Calu3 (cell line): ENCODE measurements at regions of chr7 and their contacts with region 1.

Region 1: DNA sequence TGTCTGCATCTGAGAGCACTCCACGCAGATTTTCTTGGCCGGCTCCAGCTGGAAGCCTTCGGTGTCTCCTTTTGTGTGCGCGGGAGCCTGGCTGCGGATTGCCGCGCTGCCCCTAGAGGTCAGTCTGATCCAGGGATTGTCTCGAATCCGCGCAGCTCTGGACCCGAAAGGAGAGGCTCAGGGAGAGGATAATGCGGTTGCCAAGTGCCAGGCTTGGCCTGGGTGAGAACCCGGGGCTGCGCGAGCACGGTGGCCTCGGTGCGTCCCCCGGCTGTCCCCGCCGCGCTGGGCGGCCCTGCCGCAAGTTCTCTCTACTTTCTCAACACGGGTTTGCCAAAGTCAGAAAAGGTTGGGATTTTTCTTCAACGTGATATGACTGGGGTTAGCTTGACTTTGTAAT is 140.9 kb downstream of the ADCYAP1R1 start:
- DNase-seq: peak; percentile 84
- H3K4me3 Mint-ChIP-seq: no peak overlapping the region
- H3K27ac Mint-ChIP-seq: no peak overlapping the region
- H3K4me1 Mint-ChIP-seq: no peaks in the 10 kb centered on the region
- H3K27me3 Mint-ChIP-seq: peaks cover 66% of the 10 kb centered on the region
- CTCF ChIP-seq: peak; percentile 93

Region 2: GRCh38 chr7:31336202-31337001 is 143.4 kb after region 1 on chr7:
- CTCF ChIA-PET with region 1: interaction called, 11 read pairs
- intact Hi-C with region 1: loop called (anchors 2 kb)
- DNase-seq: peak; percentile 78
- H3K4me3 Mint-ChIP-seq: peak overlapping the region; percentile 67
- H3K27ac Mint-ChIP-seq: no peak overlapping the region
- H3K4me1 Mint-ChIP-seq: no peaks in the 10 kb centered on the region
- H3K27me3 Mint-ChIP-seq: peaks cover 83% of the 10 kb centered on the region
- CTCF ChIP-seq: peak; percentile 88

Region 3: DNA sequence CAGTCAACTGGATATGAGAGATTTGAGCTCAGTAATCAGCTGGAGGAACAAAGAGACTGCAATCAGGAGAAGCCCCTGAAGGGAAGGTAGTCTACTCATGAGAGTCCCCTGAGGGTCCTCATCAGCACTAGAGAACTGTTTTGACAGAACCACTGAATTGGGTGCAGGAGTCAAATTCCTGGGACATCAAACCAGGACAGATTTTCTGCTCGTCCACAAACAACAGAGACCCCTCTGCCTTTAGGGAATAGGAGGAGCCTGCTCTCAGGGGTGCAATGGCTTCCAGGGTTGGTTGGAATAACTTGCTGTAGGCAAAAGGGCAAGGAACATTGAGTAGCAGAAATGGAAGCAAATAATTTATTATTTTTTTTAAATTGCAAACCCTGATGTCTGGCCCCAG is 169.4 kb after region 1 on chr7:
- CTCF ChIA-PET with region 1: no interaction called
- intact Hi-C with region 1: no loop called
- DNase-seq: no peak
- H3K4me3 Mint-ChIP-seq: no peak overlapping the region
- H3K27ac Mint-ChIP-seq: no peak overlapping the region
- H3K4me1 Mint-ChIP-seq: no peaks in the 10 kb centered on the region
- H3K27me3 Mint-ChIP-seq: peaks cover 61% of the 10 kb centered on the region
- CTCF ChIP-seq: no peak

Region 4: GRCh38 chr7:31633894-31634494 is 441.0 kb after region 1 on chr7:
- CTCF ChIA-PET with region 1: interaction called, 13 read pairs
- intact Hi-C with region 1: loop called (anchors 2 kb)
- DNase-seq: peak; percentile 83
- H3K4me3 Mint-ChIP-seq: no peak overlapping the region
- H3K27ac Mint-ChIP-seq: peak overlapping the region; percentile 44
- H3K4me1 Mint-ChIP-seq: peaks cover 28% of the 10 kb centered on the region
- H3K27me3 Mint-ChIP-seq: no peaks in the 10 kb centered on the region
- CTCF ChIP-seq: peak; percentile 92

Region 5: GRCh38 chr7:31735991-31736982 is 543.3 kb after region 1 on chr7:
- CTCF ChIA-PET with region 1: interaction called, 3 read pairs
- intact Hi-C with region 1: loop called (anchors 1 kb)
- DNase-seq: peak; percentile 86
- H3K4me3 Mint-ChIP-seq: no peak overlapping the region
- H3K27ac Mint-ChIP-seq: no peak overlapping the region
- H3K4me1 Mint-ChIP-seq: no peaks in the 10 kb centered on the region
- H3K27me3 Mint-ChIP-seq: no peaks in the 10 kb centered on the region
- CTCF ChIP-seq: peak; percentile 94